Heart right ventricle (tissue), 16 donors: ENCODE measurements at regions of chr20 and their contacts with region 1.

Region 1: GRCh38 chr20:53939572-53940359 is 130.6 kb downstream of the BCAS1 start:
- DNase-seq: peak; percentile 88 to 95
- ATAC-seq: peak; percentile 87 to 96 (median 94)
- H3K4me3 ChIP-seq: peak overlapping the region in 5 of 10 donors; percentile 17 to 36 (median 21)
- H3K27ac ChIP-seq: peak overlapping the region in 9 of 10 donors; percentile 59 to 85 (median 82)
- H3K4me1 ChIP-seq: peaks cover 7 to 65% (median 55%) of the 10 kb centered on the region in 9 donors
- H3K27me3 ChIP-seq: no peaks in the 10 kb centered on the region
- CTCF ChIP-seq: peak; percentile 60 to 87 (median 80)

Region 2: DNA sequence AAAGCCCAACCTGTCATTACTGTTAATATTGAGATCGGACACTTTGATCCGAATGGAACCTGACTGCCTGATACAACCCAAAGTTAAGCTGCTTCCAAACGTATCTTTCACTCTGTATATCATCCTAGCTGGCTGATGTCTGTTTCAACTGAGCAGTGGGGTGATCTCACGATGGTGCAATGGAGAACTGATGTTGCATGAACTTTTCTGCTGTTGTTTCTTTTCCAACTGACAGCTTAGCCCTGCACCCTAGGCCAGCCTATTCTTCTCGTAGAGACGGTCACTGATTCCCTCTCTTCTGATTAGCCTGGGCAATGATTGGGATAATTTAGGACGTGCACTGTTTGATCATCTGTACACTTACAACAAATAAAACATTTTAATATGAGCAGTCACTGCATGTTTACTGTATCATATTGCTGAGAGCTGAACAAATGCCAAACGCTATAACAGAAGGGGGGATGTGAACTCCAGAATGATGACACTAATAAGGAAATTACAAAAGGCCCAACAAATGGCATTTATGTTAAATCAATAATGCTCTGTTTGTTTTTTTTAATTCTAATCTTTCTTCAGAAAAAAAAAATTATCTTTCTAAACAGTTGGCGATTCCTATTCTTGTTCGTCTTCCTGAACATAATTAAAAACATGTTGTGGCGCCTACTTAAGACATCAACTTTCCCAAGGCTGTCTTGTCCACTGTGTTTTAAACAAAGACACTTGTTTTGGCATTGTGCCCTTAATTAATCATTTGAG is 530.9 kb before region 1 on chr20:
- intact Hi-C with region 1: loop called in 1 of 10 experiments (anchors 10 kb)
- DNase-seq: no peak
- ATAC-seq: peak in 6 of 8 donors; percentile 48 to 69 (median 56)
- H3K4me3 ChIP-seq: no peak overlapping the region
- H3K27ac ChIP-seq: peak overlapping the region in 5 of 10 donors; percentile 8 to 69 (median 25)
- H3K4me1 ChIP-seq: peaks cover 0 to 27% (median 12%) of the 10 kb centered on the region in 9 donors
- H3K27me3 ChIP-seq: no peaks in the 10 kb centered on the region
- CTCF ChIP-seq: no peak

Region 3: GRCh38 chr20:53915446-53916172 is 24.2 kb before region 1 on chr20:
- intact Hi-C with region 1: loop called in 3 of 10 experiments (anchors 1 to 2 kb)
- DNase-seq: peak; percentile 96 to 98
- ATAC-seq: peak; percentile 87 to 96 (median 92)
- H3K4me3 ChIP-seq: peak overlapping the region; percentile 50 to 76 (median 64)
- H3K27ac ChIP-seq: peak overlapping the region; percentile 65 to 97 (median 89)
- H3K4me1 ChIP-seq: peaks cover 5 to 47% (median 33%) of the 10 kb centered on the region in 9 donors
- H3K27me3 ChIP-seq: no peaks in the 10 kb centered on the region
- CTCF ChIP-seq: peak; percentile 84 to 93 (median 92)

Region 4: GRCh38 chr20:54062812-54063280 is 123.1 kb after region 1 on chr20:
- intact Hi-C with region 1: loop called in 3 of 10 experiments (anchors 5 to 10 kb)
- DNase-seq: no peak
- ATAC-seq: peak in 5 of 8 donors; percentile 22 to 71 (median 46)
- H3K4me3 ChIP-seq: no peak overlapping the region
- H3K27ac ChIP-seq: peak overlapping the region in 1 of 10 donors; percentile 6
- H3K4me1 ChIP-seq: peaks cover 0 to 14% (median 0%) of the 10 kb centered on the region in 9 donors
- H3K27me3 ChIP-seq: peaks cover 0 to 14% (median 7%) of the 10 kb centered on the region in 7 donors
- CTCF ChIP-seq: peak; percentile 14 to 78 (median 66)

Region 5: DNA sequence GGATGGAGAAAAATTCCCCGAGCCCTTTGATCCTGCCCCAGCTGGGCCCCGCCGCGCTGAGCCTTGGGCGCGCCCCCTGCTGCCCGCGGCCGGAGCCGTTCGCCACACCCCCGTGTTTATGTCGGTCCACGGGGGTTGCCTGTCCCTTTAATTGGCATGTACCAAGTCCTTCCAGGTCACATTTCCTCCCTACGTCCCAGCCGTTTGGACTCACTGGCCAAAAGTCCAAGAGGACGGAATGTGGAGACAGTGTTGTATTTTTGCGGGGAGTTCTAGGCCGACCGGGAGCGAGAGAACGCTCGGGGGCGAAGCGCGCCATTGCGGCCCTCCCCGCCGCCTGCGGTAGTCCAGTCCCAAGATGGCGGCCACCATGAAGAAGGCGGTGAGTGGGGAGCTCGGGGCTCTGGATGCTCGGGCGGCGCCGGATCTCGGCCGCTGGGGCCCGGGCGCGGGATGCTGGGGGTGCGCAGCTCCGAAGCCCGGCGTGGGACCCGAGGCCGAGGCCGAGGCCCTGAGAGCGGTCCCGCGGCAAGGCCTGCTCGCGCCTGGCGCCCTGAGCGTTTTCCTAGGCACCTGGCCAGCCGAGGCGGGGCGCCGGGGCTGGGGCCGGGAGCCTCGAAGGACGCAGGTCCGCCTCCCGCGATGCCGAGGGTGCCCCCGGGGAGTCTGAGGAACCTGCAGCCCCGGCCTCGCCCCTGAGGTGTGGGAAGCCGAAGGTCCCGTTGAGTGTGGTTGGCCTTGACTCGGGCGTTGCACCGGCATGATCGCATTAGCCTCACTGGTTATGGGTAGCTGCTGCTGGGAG is 268.2 kb after region 1 on chr20 and contains the start of gene PFDN4:
- intact Hi-C with region 1: loop called in 1 of 10 experiments (anchors 10 kb)
- DNase-seq: peak; percentile 82 to 85
- ATAC-seq: peak; percentile 96 to 98 (median 97)
- H3K4me3 ChIP-seq: peak within 1 kb of the TSS; percentile 76 to 99 (median 91)
- H3K27ac ChIP-seq: peak within 1 kb of the TSS; percentile 94 to 100 (median 99)
- H3K4me1 ChIP-seq: peaks cover 0 to 33% (median 23%) of the 10 kb centered on the region in 9 donors
- H3K27me3 ChIP-seq: no peaks in the 10 kb centered on the region
- CTCF ChIP-seq: peak; percentile 74 to 97 (median 89)
- total RNA-seq, gene PFDN4: 21.9 to 37.0 (median 28.2) TPM